ENCODE measurements at regions of chr14 and their contacts with region 1.

Region 1: GRCh38 chr14:105045710-105046326 is 19.4 kb downstream of the GPR132 start:
- DNase-seq: peak; percentile 83
- H3K27ac ChIP-seq: peak overlapping the region; percentile 23; the same call in 1 of the 2 replicates
- CTCF ChIP-seq: peak; percentile 99

Region 2: DNA sequence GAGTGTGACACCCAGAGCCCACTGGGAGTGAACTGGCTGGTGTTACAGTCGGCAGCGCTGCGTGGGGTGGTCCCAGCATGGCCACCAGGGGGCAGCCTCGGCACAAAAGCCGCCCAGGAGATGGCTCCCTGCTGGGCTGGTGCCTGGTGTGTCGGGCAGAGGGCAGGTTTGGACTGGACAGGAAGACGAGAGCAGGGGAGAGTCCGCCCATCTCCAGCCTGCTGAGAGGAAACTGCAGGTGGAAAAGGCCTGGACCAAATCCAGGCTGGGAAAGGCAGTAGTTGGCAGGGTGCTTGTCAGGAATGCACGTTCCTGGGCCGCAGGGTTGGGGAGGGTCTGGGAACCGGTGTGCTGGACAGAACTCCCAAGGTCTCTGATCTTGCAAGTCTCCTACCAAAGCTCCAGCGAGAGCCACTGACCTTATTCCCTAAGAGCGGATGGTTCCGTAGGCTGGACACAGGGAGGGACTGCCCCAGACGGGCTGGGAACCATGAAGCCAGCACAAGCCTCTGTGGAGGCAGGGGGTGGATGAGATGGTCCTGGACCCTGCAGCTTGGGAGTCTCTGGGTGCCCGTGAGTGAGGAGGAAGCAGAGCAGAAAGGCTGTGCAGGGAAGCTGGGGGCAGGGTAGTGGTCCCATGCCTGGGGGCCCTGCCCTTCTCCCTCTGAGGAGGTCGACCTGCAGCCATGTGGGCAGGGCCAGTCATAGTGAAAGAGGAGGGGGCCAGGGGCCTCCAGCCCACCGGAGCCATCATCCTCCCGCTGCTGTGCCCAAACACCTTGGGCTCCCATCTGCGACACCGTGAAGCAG is 69.4 kb before region 1 on chr14:
- CTCF ChIA-PET with region 1: interaction called, 42 read pairs
- POLR2A ChIA-PET with region 1: no interaction called
- DNase-seq: peak; percentile 66
- H3K27ac ChIP-seq: peak overlapping the region; percentile 100
- CTCF ChIP-seq: peak; percentile 93

Region 3: GRCh38 chr14:104985675-104986525 is 59.9 kb before region 1 on chr14 and contains the start of gene CLBA1:
- CTCF ChIA-PET with region 1: interaction called, 13 read pairs
- POLR2A ChIA-PET with region 1: no interaction called
- DNase-seq: peak; percentile 91
- H3K27ac ChIP-seq: peak within 1 kb of the TSS; percentile 100
- CTCF ChIP-seq: no peak

Region 4: DNA sequence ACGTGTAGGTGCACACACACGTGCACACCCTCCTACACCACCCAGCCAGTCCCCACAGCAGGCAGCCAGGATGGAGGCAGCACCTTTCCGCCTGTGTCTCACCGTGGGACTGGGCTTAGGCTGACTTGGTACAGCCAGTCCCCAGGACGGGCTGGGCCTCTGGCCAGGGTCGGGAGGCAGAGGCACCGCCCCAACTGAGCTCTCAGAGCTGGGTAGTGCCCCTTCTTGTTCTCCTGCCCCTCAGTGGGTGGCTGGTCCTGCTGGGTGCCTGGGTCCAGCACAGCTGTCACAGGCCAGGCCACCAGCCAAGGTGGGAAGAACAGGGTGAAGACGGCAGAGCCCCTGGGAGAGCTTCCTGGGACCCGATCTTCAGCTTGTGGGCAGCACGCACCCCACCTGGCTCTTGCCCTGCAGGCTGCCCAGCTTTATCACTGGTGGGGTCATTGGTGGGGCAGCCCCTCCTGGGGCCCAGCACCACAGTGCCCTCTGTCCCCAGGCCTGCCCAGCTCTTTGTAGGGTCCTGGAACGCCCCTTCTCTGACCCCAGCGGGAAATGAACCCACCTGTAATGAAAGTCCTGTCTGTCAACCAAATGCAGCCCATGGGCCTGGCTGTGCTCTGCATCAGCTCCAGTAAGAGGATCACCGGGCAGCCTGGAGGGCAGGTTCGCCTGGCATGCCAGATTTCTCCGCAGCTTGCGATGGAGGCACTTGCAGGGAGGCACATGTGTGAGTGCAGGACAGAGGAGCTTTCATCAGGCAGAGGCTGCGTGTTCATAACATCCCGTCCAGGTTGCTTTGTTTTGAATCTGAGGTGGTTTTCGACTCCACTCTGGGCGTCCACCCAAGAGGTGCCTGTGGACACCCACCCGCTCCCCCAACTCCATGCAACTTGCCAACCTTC is 39.6 kb before region 1 on chr14:
- CTCF ChIA-PET with region 1: interaction called, 10 read pairs
- POLR2A ChIA-PET with region 1: no interaction called
- DNase-seq: no peak
- H3K27ac ChIP-seq: peak overlapping the region; percentile 96
- CTCF ChIP-seq: no peak

Region 5: GRCh38 chr14:105018414-105018813 is 27.4 kb before region 1 on chr14:
- CTCF ChIA-PET with region 1: interaction called, 16 read pairs
- POLR2A ChIA-PET with region 1: no interaction called
- DNase-seq: no peak
- H3K27ac ChIP-seq: peak overlapping the region; percentile 94
- CTCF ChIP-seq: no peak